Esophagus muscularis mucosa (tissue), 4 donors: ENCODE measurements at regions of chr5 and their contacts with region 1.

Region 1: DNA sequence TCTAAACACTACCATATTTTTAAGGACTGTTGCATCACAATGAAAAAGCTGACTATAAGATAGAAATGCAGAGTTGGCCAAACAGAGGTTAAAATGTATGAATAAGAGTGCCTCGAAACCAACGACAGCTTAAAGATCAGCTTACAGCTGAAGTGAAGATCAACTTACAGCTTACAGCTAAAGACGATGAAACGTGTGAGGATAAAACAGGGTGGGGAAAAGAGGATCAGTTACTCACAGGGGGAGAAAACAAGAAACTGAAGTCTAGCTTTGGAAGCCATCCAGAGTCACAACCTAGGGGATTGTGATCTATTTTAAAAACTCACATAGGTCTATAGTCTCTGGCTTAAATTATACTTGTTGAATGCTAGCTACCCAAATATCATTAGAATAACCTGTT is 220.0 kb downstream of the SNCAIP start:
- DNase-seq: no peak
- H3K4me3 ChIP-seq: no peak overlapping the region
- H3K27ac ChIP-seq: no peak overlapping the region
- H3K4me1 ChIP-seq: no peaks in the 10 kb centered on the region
- H3K27me3 ChIP-seq: no peaks in the 10 kb centered on the region
- CTCF ChIP-seq: no peak
- EP300 ChIP-seq: no peak
- POLR2A ChIP-seq: no peak

Region 2: DNA sequence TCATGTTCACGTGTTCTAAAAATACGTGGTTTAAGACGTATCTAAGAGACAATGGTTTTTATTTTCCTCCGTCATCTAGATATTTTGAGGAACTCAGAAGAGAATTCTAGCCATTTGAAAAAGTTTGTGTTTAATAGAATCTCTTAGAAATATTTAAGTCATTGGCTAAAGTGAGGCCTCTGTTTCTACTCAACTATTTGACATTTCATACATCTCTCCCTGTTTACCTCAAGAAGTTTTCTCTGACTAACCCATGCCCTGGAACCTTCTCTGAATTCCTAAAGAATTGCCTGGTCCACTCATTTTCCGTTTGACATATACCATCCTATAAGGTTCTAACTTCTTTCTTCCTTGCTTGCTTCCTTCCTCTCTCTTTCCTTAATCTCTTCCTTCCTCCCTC is 41.3 kb before region 1 on chr5:
- intact Hi-C with region 1: loop called (anchors 2 kb)
- DNase-seq: no peak
- H3K4me3 ChIP-seq: no peak overlapping the region
- H3K27ac ChIP-seq: no peak overlapping the region
- H3K4me1 ChIP-seq: peaks cover 0 to 4% (median 0%) of the 10 kb centered on the region in 4 donors
- H3K27me3 ChIP-seq: no peaks in the 10 kb centered on the region
- CTCF ChIP-seq: no peak
- EP300 ChIP-seq: no peak
- POLR2A ChIP-seq: no peak